Stomach (tissue), 19 donors: ENCODE measurements at regions of chr1 and their contacts with region 1.

Region 1: DNA sequence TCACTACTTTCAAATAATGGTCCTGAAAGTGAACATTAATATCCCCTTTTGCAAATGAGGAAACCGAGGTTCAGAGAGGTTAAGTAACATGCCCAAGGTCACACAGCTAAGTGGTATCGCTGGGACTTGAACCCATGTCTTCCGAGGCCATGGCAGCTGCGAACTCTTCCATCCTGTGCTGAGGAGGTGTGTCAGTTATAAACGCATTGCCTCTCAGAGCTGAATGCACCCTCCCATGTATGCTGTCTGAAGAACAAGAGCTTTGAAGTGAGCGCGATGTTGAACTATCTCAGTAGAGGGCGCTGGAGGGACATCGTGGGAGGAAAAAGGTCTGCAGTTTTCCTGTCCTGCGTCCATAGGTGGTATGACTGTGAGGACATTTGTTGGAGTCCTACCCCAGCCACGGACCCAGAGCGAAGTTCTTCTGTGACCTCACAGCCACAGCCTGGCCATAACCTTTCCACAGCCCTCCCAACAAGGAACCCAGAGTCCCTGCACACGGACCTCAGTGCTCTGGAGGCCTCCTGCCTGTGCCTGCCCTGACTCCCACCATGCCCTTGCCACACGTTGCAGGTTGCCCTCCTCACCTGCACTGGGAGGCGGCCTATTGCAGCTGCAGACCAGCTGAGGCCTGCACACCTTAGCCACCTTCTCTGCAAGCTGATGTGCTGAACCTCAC is 7.5 kb downstream of the MYOC start:
- DNase-seq: peak; percentile 79 to 95
- H3K4me3 ChIP-seq: no peak overlapping the region
- H3K27ac ChIP-seq: peak overlapping the region in 4 of 5 donors; percentile 48 to 78 (median 59)
- H3K4me1 ChIP-seq: peaks cover 10 to 20% (median 14%) of the 10 kb centered on the region in 4 donors
- H3K27me3 ChIP-seq: no peaks in the 10 kb centered on the region
- CTCF ChIP-seq: peak in 5 of 7 experiments; percentile 59 to 71 (median 64)
- EP300 ChIP-seq: no peak
- POLR2A ChIP-seq: no peak

Region 2: GRCh38 chr1:171715813-171716251 is 70.9 kb after region 1 on chr1:
- intact Hi-C with region 1: loop called (anchors 10 kb)
- DNase-seq: peak in 1 of 2 donors; percentile 35
- H3K4me3 ChIP-seq: no peak overlapping the region
- H3K27ac ChIP-seq: peak overlapping the region in 2 of 5 donors; percentile 8 to 23
- H3K4me1 ChIP-seq: peaks cover 0 to 24% (median 12%) of the 10 kb centered on the region in 4 donors
- H3K27me3 ChIP-seq: no peaks in the 10 kb centered on the region
- CTCF ChIP-seq: peak in 4 of 7 experiments; percentile 26 to 45 (median 30)
- EP300 ChIP-seq: no peak
- POLR2A ChIP-seq: no peak

Region 3: DNA sequence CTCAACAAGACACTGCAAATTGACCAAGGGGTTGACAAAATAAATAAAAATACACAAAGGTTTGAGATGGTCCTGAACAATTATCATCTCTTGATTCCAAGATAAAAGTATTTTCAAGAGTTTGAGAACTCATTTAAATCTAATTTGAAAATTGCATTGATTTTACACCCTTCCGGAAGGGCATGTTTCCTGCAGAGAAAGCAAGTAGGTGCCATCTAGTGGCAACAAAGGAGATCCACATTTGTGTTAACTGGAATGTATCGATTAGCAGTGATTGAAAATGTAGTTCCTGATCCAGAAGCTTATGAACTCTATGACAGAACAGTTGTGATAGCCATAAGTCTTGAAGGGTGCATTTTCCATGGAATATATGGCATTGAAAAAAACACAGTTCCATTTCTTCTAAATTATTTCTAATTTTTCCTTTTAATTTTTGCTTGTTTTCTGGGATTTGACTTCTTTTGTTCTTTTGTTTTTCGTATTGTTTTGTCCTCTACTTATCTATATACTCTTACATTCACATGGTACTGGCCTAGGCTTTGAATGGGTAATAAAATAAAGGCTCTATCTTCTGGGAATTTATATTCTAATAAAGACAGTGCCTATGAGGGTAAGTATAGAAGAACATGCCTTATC is 340.0 kb after region 1 on chr1:
- intact Hi-C with region 1: loop called (anchors 10 kb)
- DNase-seq: peak in 1 of 2 donors; percentile 52
- H3K4me3 ChIP-seq: no peak overlapping the region
- H3K27ac ChIP-seq: no peak overlapping the region
- H3K4me1 ChIP-seq: peaks cover 0 to 11% (median 0%) of the 10 kb centered on the region in 4 donors
- H3K27me3 ChIP-seq: no peaks in the 10 kb centered on the region
- CTCF ChIP-seq: peak in 5 of 7 experiments; percentile 46 to 67 (median 61)
- EP300 ChIP-seq: no peak
- POLR2A ChIP-seq: no peak